CD4-positive, alpha-beta memory T cell (primary cell): ENCODE measurements at regions of chr22 and their contacts with region 1.

Region 1: DNA sequence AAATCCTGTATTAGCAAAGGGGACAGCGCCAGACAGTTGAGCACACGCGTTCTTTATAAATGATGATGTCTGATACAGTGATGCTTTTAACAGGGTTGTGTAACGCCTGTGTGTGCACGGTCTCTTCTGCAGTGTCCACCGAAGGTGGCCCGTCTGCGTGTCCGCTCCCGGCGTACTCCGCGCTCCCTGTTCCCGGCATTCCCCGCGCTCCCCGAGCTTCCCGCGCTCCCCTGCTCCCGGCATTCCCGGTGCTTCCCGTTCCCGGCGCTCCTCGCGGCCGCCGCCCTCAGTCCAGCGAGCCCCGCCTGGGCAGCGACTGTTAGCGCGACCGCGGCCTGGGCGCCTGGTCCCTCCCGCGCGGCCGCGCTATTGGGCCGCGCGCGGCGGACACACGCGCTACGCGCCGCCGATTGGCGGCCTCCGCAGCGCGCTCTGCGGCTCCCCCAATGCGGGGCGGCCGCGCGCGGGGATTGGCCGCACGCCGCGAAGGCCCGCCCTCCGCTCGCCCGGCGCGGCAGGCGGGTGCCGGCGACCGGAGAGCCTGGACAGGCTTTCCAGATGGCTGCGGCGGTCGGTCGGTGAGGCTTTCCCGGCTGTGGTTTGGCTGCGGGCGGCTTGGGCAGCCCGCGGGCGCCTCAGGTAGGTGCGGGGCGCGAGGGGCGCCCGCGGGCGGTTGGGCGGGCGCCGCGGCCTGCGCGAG is at the start of gene DGCR8:
- DNase-seq: peak; percentile 52 to 83 (median 79)
- H3K4me3 ChIP-seq: peak within 1 kb of the TSS; percentile 80 to 86
- H3K4me3 Mint-ChIP-seq: peak within 1 kb of the TSS; percentile 87 to 99 (median 94)
- H3K27ac ChIP-seq: peak within 1 kb of the TSS; percentile 80
- H3K27ac Mint-ChIP-seq: peak within 1 kb of the TSS; percentile 85 to 97 (median 91)
- H3K4me1 ChIP-seq: peaks cover 52% of the 10 kb centered on the region
- H3K4me1 Mint-ChIP-seq: peaks cover 27 to 47% (median 39%) of the 10 kb centered on the region in 4 donors
- H3K27me3 ChIP-seq: no peaks in the 10 kb centered on the region
- H3K27me3 Mint-ChIP-seq: no peaks in the 10 kb centered on the region
- total RNA-seq, gene DGCR8: 47.6 to 48.2 TPM

Region 2: GRCh38 chr22:19959043-19959586 is 120.8 kb before region 1 on chr22:
- CTCF ChIA-PET with region 1: no interaction called
- POLR2A ChIA-PET with region 1: no interaction called
- intact Hi-C with region 1: no loop called
- DNase-seq: no peak
- H3K4me3 ChIP-seq: no peak overlapping the region
- H3K4me3 Mint-ChIP-seq: no peak overlapping the region
- H3K27ac ChIP-seq: no peak overlapping the region
- H3K27ac Mint-ChIP-seq: no peak overlapping the region
- H3K4me1 ChIP-seq: peaks cover 14% of the 10 kb centered on the region
- H3K4me1 Mint-ChIP-seq: peaks cover 6 to 10% (median 6%) of the 10 kb centered on the region in 4 donors
- H3K27me3 ChIP-seq: no peaks in the 10 kb centered on the region
- H3K27me3 Mint-ChIP-seq: no peaks in the 10 kb centered on the region

Region 3: DNA sequence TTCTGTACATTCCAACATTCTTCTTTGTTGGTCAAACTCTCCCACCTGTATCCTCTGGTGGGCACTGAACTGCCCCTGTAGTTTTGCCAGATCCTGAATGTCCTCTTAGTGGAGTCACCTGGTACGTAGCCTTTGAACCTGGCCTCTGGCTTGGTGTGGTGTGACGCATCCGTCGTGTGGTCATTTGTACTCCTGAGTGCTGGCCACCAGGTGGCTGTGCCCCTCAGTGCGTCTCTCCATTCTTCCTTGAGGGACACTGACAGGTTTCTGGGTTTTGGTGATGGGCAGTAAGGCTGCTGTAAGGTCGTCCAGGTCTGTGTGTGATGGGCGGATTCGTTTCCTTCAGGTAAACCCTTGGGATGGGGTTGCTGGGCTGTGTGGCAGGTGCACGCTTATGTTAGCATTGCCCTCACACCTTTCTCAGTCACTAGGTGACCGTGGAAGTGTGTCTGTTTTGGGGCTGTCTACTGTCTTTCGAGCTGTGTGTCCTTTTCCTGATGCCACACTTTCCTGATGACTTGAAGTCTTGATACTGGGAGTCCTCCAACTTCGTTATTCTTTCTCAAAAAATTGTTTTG is 22.4 kb after region 1 on chr22:
- CTCF ChIA-PET with region 1: interaction called, 7 read pairs
- POLR2A ChIA-PET with region 1: interaction called, 6 read pairs
- intact Hi-C with region 1: loop called (anchors 1 kb)
- DNase-seq: no peak
- H3K4me3 ChIP-seq: no peak overlapping the region
- H3K4me3 Mint-ChIP-seq: peak overlapping the region in 1 of 8 donors; percentile 35
- H3K27ac ChIP-seq: no peak overlapping the region
- H3K27ac Mint-ChIP-seq: peak overlapping the region; percentile 8 to 98 (median 84)
- H3K4me1 ChIP-seq: peaks cover 30% of the 10 kb centered on the region
- H3K4me1 Mint-ChIP-seq: peaks cover 24 to 43% (median 34%) of the 10 kb centered on the region in 4 donors
- H3K27me3 ChIP-seq: no peaks in the 10 kb centered on the region
- H3K27me3 Mint-ChIP-seq: no peaks in the 10 kb centered on the region

Region 4: GRCh38 chr22:20324139-20324516 is 244.2 kb after region 1 on chr22:
- CTCF ChIA-PET with region 1: no interaction called
- POLR2A ChIA-PET with region 1: no interaction called
- intact Hi-C with region 1: no loop called
- DNase-seq: peak in 4 of 5 donors; percentile 26 to 45 (median 28)
- H3K4me3 ChIP-seq: no peak overlapping the region
- H3K4me3 Mint-ChIP-seq: peak overlapping the region in 4 of 8 donors; percentile 49 to 78 (median 62)
- H3K27ac ChIP-seq: no peak overlapping the region
- H3K27ac Mint-ChIP-seq: peak overlapping the region; percentile 65 to 87 (median 83)
- H3K4me1 ChIP-seq: peaks cover 40% of the 10 kb centered on the region
- H3K4me1 Mint-ChIP-seq: peaks cover 29 to 59% (median 37%) of the 10 kb centered on the region in 4 donors
- H3K27me3 ChIP-seq: no peaks in the 10 kb centered on the region
- H3K27me3 Mint-ChIP-seq: no peaks in the 10 kb centered on the region